ENCODE measurements at regions of chr20 and their contacts with region 1.

Region 1: DNA sequence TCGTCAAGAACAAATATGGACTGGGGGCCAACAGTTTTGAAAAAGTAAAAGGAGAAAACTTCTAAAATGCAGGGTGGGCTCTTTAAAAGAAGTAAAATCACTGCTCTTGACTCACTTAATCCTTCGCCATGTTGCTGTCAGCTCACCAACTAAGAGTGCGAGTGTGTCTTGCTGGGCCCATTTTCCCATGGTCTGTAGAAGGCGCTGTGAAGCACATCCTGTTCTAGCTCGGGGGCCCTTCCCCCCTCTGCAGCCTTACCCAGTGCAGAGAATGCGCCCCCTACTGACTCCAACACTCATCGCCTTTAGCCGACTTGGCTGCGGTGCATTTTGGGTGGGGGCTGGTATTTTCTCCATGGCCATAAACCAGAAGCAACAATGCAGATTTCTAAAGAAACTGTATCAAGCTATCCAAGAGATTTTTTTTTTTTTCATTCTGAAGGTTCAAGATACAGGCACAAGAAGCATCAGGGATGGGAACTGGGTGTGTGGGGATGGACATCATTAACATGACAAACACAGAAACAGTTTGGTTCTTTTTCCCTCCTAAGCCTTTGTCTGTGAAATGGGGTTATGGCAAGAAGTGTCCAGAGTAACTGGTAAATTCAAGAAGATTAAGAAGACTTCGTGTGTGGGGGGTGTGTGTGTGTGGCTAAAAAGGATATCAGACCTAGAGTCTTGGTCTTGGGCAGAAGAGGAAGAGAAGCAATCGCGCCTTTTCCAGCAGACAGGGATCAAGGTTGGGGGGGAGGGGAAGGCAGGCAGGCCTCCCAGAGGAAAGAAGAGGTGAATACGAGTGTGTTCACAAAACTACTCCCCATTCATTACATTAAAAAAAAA is 1.7 kb downstream of the ADNP start:
- DNase-seq: peak; percentile 91 to 95 (median 92)
- ATAC-seq: peak; percentile 66
- H3K4me3 ChIP-seq: peak overlapping the region; percentile 73 to 76
- H3K27ac ChIP-seq: peak overlapping the region; percentile 63 to 100 (median 83)
- H3K4me1 ChIP-seq: peaks cover 53% of the 10 kb centered on the region
- H3K27me3 ChIP-seq: no peaks in the 10 kb centered on the region
- CTCF ChIP-seq: peak; percentile 73 to 98 (median 95)
- POLR2A ChIP-seq: no peak

Region 2: GRCh38 chr20:50815162-50815989 is 114.1 kb before region 1 on chr20:
- intact Hi-C with region 1: loop called (anchors 10 kb)
- DNase-seq: no peak
- ATAC-seq: no peak
- H3K4me3 ChIP-seq: no peak overlapping the region
- H3K27ac ChIP-seq: no peak overlapping the region
- H3K4me1 ChIP-seq: peaks cover 5% of the 10 kb centered on the region
- H3K27me3 ChIP-seq: no peaks in the 10 kb centered on the region
- CTCF ChIP-seq: no peak
- POLR2A ChIP-seq: no peak